ENCODE measurements at regions of chr9 and their contacts with region 1.

Region 1: GRCh38 chr9:123091459-123091858 is 58.0 kb downstream of the GPR21 start:
- DNase-seq: no peak
- H3K4me3 ChIP-seq: no peak overlapping the region
- H3K27ac ChIP-seq: peak overlapping the region; percentile 84
- H3K4me1 ChIP-seq: peaks cover 36% of the 10 kb centered on the region
- H3K27me3 ChIP-seq: no peaks in the 10 kb centered on the region
- CTCF ChIP-seq: peak; percentile 58

Region 2: DNA sequence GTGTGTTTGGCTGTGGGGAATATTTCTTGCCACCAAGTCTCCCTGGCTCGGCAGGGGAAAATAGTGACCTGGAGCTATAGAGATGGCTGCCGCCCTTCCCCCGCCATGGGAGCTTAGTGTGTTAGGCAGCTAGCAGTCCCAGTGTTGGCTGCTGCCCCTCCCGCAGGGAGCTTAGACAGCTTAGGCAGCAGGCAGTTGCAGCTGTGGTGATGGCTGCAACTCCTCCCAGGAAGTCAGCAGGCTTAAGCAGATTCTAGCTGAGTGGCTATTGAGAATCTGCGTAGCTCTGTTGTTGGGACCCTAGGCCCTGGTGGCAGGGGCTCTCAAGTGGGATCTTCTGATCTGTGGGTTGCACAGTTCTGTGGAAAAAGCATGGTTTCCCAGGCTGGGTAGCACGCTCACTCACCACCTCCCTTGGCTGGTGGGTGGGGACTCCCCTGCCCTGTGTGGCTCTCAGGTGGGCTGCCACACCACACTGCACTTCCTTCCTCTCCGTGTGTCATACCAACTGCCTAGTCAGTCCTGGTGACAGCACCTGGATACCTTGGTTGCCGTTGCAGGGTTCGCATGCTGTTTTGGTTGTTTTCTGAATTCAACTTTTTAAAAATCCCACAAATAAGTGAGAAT is 529.2 kb before region 1 on chr9:
- CTCF ChIA-PET with region 1: no interaction called
- POLR2A ChIA-PET with region 1: no interaction called
- intact Hi-C with region 1: no loop called
- DNase-seq: peak; percentile 5
- H3K4me3 ChIP-seq: no peak overlapping the region
- H3K27ac ChIP-seq: no peak overlapping the region
- H3K4me1 ChIP-seq: no peaks in the 10 kb centered on the region
- H3K27me3 ChIP-seq: peaks cover 4% of the 10 kb centered on the region
- CTCF ChIP-seq: no peak

Region 3: DNA sequence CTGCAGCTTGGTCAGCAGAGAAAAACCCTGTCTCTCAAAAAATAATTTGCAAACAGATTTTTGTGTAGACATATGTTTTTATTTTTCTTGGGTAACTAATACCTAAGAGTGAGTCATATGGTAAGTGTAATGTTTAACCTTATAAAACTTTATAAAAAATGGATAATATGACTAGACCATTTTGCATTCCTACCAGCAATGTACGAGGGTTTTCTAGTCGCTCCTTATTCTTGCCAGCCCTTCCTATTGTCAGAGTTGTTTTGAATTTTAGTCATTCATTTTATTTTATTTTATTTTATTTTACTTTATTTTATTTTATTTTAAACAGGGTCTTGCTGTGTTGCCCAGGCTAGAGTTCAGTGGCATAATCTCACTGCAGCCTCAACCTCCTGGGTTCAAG is 112.9 kb before region 1 on chr9:
- CTCF ChIA-PET with region 1: interaction called, 13 read pairs
- POLR2A ChIA-PET with region 1: no interaction called
- intact Hi-C with region 1: no loop called
- DNase-seq: no peak
- H3K4me3 ChIP-seq: no peak overlapping the region
- H3K27ac ChIP-seq: no peak overlapping the region
- H3K4me1 ChIP-seq: peaks cover 23% of the 10 kb centered on the region
- H3K27me3 ChIP-seq: no peaks in the 10 kb centered on the region
- CTCF ChIP-seq: no peak

Region 4: DNA sequence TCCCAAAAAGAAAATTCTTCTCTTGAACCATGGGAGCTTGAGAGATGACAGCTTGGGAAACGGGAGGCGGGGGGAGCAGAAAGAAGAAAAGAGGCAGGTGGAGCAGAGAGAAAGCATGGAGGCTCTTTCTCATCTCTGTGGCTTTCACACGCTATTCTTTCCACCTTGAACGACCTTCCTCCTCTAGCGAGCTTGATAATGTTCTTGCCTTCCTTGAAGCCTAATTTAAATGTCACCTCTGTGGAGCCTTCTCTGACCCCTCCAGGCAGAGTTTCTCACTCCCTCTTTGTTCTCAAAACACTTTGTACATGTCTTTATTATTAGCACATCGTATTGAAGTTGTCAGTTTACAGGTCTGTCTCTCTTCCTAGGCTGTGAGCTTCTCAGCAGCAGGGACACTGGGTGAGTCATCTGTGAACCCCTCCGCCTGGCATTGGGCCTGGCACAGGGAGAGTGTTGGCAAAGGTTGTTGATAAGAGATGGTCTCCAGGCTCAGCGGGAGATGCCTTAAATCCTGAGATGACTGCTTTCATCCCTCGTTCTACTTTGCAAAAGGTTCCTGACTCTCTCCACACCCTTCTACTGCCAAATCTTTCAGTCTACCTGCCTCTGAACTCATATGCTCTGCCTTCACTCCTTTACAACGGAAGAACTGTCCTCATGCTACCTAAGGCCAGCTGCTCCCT is 191.0 kb after region 1 on chr9:
- CTCF ChIA-PET with region 1: interaction called, 18 read pairs
- POLR2A ChIA-PET with region 1: no interaction called
- intact Hi-C with region 1: no loop called
- DNase-seq: peak; percentile 71
- H3K4me3 ChIP-seq: no peak overlapping the region
- H3K27ac ChIP-seq: no peak overlapping the region
- H3K4me1 ChIP-seq: peaks cover 14% of the 10 kb centered on the region
- H3K27me3 ChIP-seq: no peaks in the 10 kb centered on the region
- CTCF ChIP-seq: no peak

Region 5: DNA sequence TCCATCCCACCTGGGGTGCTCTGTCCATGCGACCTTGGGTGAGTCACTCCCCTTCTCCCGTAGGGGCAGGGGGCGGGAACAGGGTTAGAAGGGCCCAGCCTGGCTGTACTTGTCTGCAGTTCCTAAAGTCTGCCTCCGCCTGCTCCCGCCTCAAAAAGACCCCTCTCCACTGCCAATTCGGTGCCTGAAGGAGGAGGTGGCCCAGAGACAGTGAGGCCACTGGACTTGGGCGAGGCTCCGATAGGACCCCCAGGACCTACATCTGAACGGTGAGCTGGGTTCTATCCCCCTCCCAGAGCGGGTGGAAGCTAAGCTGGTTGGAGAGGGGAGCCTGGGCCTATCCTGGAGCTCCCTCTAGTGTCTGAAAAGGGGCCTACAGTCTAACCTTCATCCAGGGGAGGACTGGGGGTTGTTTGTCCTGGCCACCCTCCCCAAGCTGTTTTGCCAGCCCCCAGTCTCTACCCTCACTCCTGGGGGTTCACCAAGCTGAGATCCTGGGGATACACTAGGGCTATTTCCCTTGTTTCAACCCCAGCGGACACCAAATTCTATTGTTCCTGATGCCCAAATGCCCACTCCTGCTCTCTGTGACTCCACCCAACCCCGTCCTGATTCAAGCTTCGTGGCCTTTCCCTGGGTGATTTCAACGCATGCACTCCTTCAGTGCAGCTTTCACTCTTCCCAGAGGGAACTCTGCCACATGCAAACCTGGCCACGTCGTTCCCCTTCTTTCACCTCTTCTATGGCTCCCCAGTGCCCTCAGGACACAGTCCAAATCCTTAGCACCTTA is 258.4 kb after region 1 on chr9:
- CTCF ChIA-PET with region 1: no interaction called
- POLR2A ChIA-PET with region 1: no interaction called
- intact Hi-C with region 1: no loop called
- DNase-seq: peak; percentile 85
- H3K4me3 ChIP-seq: no peak overlapping the region
- H3K27ac ChIP-seq: peak overlapping the region; percentile 48
- H3K4me1 ChIP-seq: peaks cover 40% of the 10 kb centered on the region
- H3K27me3 ChIP-seq: no peaks in the 10 kb centered on the region
- CTCF ChIP-seq: peak; percentile 93

Measured in A673 (cell line).